PC-3 (cell line): ENCODE measurements at regions of chr5 and their contacts with region 1.

Region 1: DNA sequence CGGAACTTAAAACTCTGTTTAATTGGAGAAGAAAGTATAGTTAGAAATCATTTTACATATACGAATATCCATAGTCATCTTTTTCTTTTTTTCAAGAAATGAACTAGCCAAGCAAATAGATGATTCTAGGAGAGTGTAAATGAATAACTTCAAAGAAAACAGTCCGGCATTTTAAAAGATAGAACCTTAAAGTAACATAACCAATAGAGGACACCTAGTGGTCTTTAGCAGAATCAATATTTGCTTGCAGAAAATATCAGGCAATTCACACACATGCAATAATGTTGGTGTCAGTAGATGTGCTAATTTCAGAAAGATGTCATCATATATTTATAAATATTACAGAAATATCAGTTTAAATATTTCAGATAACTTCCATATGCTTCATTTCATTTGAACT is 57.1 kb downstream of the HCN1 start:
- DNase-seq: peak; percentile 36
- ATAC-seq: no peak
- H3K4me3 ChIP-seq: no peak overlapping the region
- H3K27ac ChIP-seq: no peak overlapping the region
- H3K4me1 ChIP-seq: no peaks in the 10 kb centered on the region
- H3K27me3 ChIP-seq: no peaks in the 10 kb centered on the region
- CTCF ChIP-seq: peak; percentile 57

Region 2: DNA sequence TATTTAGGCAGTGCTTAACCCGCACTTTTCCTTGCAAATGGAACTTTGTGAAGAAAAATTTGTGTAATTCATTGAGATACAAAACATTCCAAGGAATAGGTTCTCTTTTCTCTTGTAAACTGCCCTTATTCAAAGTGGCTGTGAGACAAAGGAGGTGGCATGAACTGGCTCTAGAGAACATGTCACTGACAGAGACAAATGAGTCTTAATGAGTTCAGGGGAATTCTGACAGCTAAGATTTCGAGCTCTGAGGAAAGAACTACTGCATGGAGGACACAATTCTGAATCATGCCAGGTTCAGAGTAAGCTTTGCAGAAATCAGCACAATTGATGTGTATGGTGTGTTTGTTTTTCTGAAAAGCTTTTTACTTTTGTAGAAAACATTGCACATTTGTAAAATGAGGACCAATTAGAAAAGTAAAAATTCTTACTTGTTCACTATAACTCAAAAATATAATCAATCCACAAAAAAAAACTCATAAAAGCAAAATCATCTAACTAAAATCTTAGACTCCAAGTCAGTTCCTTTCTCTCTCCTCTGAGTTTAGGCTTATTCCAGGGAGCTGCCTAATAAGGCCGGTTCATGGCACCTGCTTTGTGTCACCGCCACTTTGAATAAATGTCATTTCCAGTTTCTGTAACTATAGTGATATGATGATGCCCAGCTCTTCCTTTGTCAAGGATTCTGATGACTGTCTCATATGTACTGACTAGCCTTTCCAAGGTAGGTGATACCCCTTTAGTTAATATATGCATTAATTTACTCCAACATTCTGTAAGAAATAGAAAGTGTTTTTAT is 106.0 kb before region 1 on chr5:
- CTCF ChIA-PET with region 1: no interaction called
- POLR2A ChIA-PET with region 1: no interaction called
- intact Hi-C with region 1: loop called (anchors 10 kb)
- DNase-seq: no peak
- ATAC-seq: no peak
- H3K4me3 ChIP-seq: no peak overlapping the region
- H3K27ac ChIP-seq: no peak overlapping the region
- H3K4me1 ChIP-seq: no peaks in the 10 kb centered on the region
- H3K27me3 ChIP-seq: no peaks in the 10 kb centered on the region
- CTCF ChIP-seq: no peak

Region 3: DNA sequence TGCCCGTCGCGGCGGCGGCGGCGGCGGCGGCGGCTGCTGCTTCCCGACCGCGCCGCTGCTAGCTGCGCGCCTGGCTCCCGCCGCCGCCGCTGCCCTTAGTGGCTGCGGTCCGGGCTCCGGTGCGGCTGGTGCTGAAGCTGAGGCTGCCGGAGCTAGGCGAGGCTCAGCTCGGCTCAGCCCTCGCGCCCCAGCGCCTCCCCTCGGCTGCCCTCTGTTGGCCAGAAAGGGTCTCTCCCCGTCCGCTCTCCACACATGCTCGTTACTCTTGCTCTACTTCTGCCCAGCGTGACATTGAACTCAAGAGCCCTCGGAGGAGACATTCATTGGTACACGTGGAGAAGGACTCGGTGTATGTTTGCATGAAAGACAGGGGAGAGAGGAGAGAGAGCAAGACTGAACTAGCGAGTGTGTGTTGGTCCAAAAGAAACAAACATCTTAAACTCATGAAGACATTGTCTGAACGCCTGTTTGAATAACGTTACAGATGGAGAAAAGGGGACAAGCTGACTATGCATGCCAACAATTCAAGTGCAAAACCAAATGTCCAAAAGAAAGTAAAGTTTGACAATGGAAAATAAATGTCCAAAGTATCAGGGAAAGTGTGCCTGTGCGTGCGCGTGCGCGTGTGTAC is 57.3 kb after region 1 on chr5 and contains the start of gene HCN1:
- CTCF ChIA-PET with region 1: no interaction called
- POLR2A ChIA-PET with region 1: no interaction called
- intact Hi-C with region 1: loop called (anchors 10 kb)
- DNase-seq: no peak
- ATAC-seq: no peak
- H3K4me3 ChIP-seq: no peak within 1 kb of the TSS
- H3K27ac ChIP-seq: no peak within 1 kb of the TSS
- H3K4me1 ChIP-seq: no peaks in the 10 kb centered on the region
- H3K27me3 ChIP-seq: no peaks in the 10 kb centered on the region
- CTCF ChIP-seq: peak; percentile 31; the same call in 1 of the 2 replicates
- total RNA-seq, gene HCN1: not detected in 2 replicates

Region 4: GRCh38 chr5:45774528-45774927 is 135.5 kb after region 1 on chr5:
- CTCF ChIA-PET with region 1: no interaction called
- POLR2A ChIA-PET with region 1: no interaction called
- intact Hi-C with region 1: loop called (anchors 10 kb)
- DNase-seq: peak; percentile 40
- ATAC-seq: no peak
- H3K4me3 ChIP-seq: no peak overlapping the region
- H3K27ac ChIP-seq: no peak overlapping the region
- H3K4me1 ChIP-seq: no peaks in the 10 kb centered on the region
- H3K27me3 ChIP-seq: no peaks in the 10 kb centered on the region
- CTCF ChIP-seq: peak; percentile 74